ENCODE measurements at regions of chr1 and their contacts with region 1.

Region 1: GRCh38 chr1:174999216-174999925 is 376 bp upstream of the CACYBP start:
- DNase-seq: peak; percentile 98 to 99
- ATAC-seq: peak; percentile 97
- H3K4me3 ChIP-seq: peak overlapping the region; percentile 11 to 30
- H3K27ac ChIP-seq: peak overlapping the region; percentile 71 to 88
- H3K4me1 ChIP-seq: no peaks in the 10 kb centered on the region
- H3K27me3 ChIP-seq: no peaks in the 10 kb centered on the region

Region 2: DNA sequence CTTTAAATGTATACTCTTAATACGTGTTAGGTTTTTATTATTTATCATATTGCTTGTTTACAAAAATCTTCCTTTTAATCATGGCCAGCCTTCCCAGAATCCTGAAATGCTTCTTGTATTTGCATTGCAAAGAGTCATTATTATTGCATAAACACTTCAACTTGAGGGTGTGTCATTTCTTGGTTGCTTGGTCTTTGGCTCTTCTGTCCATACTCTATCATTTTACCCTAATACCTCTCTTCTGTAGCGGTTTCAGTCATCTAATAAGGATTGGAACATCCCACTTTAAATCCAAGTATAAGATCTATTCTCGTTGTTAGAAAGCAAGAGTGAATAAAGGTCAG is 200.3 kb before region 1 on chr1:
- intact Hi-C with region 1: loop called in 1 of 2 experiments (anchors 10 kb)
- DNase-seq: no peak
- ATAC-seq: no peak
- H3K4me3 ChIP-seq: peak overlapping the region; percentile 12 to 59
- H3K27ac ChIP-seq: no peak overlapping the region
- H3K4me1 ChIP-seq: peaks cover 0 to 4% of the 10 kb centered on the region in 2 donors
- H3K27me3 ChIP-seq: no peaks in the 10 kb centered on the region

Region 3: DNA sequence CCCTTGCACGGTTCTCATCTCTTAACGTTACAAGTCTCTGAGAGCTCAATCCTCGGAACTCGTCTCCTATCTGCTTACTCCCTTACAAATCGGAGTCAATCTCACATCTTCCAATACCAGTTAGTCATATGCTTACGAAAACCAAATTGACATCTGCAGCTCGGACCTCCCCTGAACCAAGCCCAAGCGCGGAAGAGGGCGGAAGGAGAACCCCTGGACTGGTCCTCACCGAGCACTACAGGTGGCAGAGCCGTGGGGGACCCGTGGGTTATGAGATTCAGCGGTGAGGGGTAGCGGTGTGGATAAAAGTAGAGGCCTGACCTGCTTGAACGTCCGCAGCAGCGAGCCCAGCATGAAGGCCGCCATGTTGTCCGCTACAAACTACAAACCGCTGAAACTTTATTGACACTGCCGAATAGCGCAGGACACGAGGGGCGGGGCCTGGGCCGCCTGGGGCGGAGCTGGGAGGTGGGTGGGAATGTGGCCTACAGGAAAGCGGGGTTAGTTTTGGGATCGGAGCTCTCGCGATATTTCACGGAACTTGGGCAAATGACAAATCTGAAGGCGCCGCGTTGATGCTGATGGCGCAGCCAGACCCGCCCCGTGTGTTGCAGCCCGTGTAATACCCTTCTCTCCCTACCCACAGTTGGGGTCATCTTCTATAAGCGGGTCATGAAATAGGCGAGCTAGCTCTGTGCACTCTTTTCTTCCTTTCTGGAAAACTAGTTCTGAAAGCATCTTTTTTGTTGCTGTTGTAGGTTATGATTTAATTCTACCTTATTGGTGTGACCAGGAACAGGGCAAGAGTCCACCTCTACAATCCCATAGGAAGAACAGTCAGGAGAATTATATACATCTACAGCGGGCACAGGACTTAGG is 23.9 kb after region 1 on chr1 and contains the start of gene MRPS14:
- intact Hi-C with region 1: loop called in 1 of 2 experiments (anchors 1 kb)
- DNase-seq: peak; percentile 98 to 99
- ATAC-seq: peak; percentile 100
- H3K4me3 ChIP-seq: peak within 1 kb of the TSS; percentile 84 to 90
- H3K27ac ChIP-seq: peak within 1 kb of the TSS; percentile 76 to 80
- H3K4me1 ChIP-seq: no peaks in the 10 kb centered on the region
- H3K27me3 ChIP-seq: no peaks in the 10 kb centered on the region
- total RNA-seq, gene MRPS14: 22.0 to 28.3 TPM

Region 4: GRCh38 chr1:175062858-175063257 is 63.5 kb after region 1 on chr1:
- intact Hi-C with region 1: no loop called
- DNase-seq: no peak
- ATAC-seq: no peak
- H3K4me3 ChIP-seq: no peak overlapping the region
- H3K27ac ChIP-seq: no peak overlapping the region
- H3K4me1 ChIP-seq: no peaks in the 10 kb centered on the region
- H3K27me3 ChIP-seq: no peaks in the 10 kb centered on the region

Region 5: GRCh38 chr1:175075572-175076568 is 76.5 kb after region 1 on chr1:
- intact Hi-C with region 1: no loop called
- DNase-seq: no peak
- ATAC-seq: no peak
- H3K4me3 ChIP-seq: no peak overlapping the region
- H3K27ac ChIP-seq: no peak overlapping the region
- H3K4me1 ChIP-seq: no peaks in the 10 kb centered on the region
- H3K27me3 ChIP-seq: no peaks in the 10 kb centered on the region